Cardiac septum (tissue), 1 donor: ENCODE measurements at regions of chr10 and their contacts with region 1.

Region 1: GRCh38 chr10:37976091-37976879 is at the start of gene ZNF25:
- DNase-seq: peak; percentile 100
- total RNA-seq, gene ZNF25: 18.9 TPM

Region 2: GRCh38 chr10:37857287-37858211 is 118.7 kb before region 1 on chr10 and contains the start of gene ZNF248:
- intact Hi-C with region 1: loop called (anchors 1 kb)
- DNase-seq: peak; percentile 98
- total RNA-seq, gene ZNF248: 10.8 TPM

Region 3: DNA sequence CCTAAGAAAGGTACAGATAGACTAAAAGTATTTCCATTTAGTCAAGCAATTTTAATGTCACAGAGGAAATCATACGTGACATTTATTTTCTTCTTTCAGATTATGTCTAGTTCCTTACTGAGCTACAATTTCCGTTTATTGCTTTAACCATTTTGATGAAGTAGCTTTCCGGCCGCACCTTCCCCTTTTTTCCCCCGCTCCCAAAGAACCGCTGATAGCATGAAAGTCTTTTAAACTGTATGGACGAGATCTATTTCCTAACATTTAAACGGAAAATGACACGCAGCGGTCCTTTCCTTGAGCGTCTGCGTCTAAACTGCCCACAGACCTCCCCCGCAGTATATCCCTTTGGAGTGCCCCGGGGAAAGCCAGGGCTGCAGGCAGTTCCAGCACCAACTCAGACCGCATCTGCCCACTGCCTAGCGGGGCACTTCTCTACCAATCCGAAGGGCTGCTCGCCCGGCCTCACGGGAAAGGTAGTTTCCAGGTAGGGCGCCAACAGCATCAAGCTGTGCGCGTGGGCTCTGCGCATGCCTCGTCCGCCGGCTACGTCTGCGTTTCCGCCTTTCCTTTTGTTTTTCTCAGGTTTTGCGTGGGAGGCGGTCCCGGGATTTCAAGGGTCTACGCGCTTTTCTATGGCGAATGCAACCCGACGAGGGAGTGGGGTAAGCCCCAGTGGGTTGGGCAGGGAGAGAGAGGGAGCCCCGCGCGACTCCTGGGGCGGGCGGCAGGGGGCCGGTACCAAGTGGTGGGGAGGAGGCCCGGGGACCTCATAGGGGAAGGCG is 34.0 kb after region 1 on chr10 and contains the start of gene ZNF33A:
- intact Hi-C with region 1: loop called (anchors 2 kb)
- DNase-seq: peak; percentile 95
- total RNA-seq, gene ZNF33A: 18.7 TPM

Region 4: GRCh38 chr10:38094158-38094920 is 118.1 kb after region 1 on chr10 and contains the start of gene ZNF37A:
- intact Hi-C with region 1: loop called (anchors 1 kb)
- DNase-seq: peak; percentile 97
- total RNA-seq, gene ZNF37A: 9.4 TPM